A549 (cell line): ENCODE measurements at regions of chr9 and their contacts with region 1.

Region 1: DNA sequence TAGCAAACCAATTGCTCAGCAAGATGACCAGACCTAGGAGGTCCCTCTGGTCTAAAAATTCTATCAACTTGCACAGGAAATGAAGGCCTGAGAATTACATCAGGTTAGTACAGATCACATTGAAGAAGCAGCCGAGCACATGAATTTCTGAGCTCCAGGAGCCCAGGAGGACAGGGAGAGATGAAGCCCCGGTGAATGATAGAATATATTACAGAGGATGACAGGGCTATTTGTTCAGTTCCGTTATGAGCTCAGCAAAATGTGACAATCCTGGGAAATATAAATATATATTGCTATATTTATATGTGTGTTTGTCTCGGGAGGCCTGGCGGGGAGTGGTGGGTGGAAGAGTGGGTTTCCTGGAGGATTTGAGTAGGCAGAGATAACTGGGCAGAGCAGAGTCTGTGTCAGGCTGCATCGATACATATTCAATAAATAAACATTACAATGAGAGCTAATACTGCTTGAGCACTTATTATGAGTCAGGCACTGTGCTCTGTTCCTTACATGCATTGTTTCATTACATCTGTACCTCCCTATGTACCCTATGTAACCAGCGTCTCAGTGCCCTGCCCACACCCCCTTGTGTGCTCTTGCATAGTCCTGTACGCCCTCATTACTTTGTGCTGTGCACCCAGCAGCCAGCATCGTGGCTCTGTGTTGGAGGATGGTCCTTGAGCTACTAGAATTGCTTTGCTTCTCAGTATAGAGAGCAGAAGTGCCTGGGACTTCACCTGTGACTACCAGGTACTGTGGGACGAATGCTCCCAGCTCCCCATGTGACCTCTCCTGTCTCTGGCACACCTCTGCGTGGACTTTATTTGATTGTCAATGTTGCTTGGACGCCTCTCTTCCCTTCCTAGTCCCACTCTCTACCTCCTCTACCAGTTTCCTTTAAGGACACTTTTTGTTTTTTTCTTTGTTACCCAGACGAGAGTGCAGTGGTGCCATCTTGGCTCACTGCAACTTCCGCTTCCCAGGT is 58.1 kb upstream of the KLF9 start:
- DNase-seq: no peak
- ATAC-seq: no peak
- H3K4me3 ChIP-seq: no peak overlapping the region
- H3K27ac ChIP-seq: no peak overlapping the region; a peak in 1 of 6 replicates
- H3K4me1 ChIP-seq: peaks cover 16% of the 10 kb centered on the region
- CTCF ChIP-seq: no peak
- EP300 ChIP-seq: no peak
- POLR2A ChIP-seq: no peak
- RAD21 ChIP-seq: no peak

Region 2: GRCh38 chr9:70484210-70485130 is 11.9 kb after region 1 on chr9:
- CTCF ChIA-PET with region 1: interaction called, 16 read pairs
- POLR2A ChIA-PET with region 1: no interaction called
- DNase-seq: peak; percentile 73 to 86
- ATAC-seq: peak; percentile 98 to 99
- H3K4me3 ChIP-seq: no peak overlapping the region
- H3K27ac ChIP-seq: peak overlapping the region in 1 of 2 experiments; percentile 44; a peak in 1 of 6 replicates
- H3K4me1 ChIP-seq: peaks cover 9% of the 10 kb centered on the region; the same call in 1 of the 3 replicates
- CTCF ChIP-seq: peak; percentile 72
- EP300 ChIP-seq: no peak
- POLR2A ChIP-seq: no peak
- RAD21 ChIP-seq: peak; percentile 74 to 76